ENCODE measurements at regions of chr6 and their contacts with region 1.

Region 1: DNA sequence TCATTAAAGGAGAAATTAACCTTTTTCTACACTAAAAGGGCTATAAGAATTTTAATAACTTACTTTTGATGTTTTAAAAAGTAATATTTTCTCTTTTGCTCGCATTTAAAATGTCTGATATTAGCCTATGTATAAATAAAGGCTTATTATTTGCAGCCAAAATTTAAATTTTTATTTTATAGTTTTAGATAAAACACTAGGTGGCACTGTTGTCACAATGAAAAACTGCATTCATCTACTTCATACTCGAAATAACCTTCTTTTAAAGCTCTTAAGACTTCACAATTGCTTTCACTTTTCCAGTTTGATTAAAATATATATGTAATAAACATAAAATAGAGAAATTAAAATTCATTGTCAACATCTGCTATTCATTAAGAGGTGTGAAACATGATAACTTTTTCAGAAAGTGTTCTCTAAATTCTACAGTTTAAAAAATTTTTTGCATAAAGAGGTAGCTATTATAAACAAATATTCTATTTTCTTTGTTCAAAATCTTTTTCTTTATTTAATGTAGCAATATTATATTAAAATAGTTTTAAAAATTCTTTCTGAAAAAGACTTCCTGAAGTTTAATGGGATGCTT is 78.8 kb upstream of the DEFB112 start:
- DNase-seq: peak; percentile 27
- H3K4me3 ChIP-seq: no peak overlapping the region
- H3K27ac ChIP-seq: no peak overlapping the region
- H3K4me1 ChIP-seq: no peaks in the 10 kb centered on the region
- CTCF ChIP-seq: peak; percentile 86

Region 2: DNA sequence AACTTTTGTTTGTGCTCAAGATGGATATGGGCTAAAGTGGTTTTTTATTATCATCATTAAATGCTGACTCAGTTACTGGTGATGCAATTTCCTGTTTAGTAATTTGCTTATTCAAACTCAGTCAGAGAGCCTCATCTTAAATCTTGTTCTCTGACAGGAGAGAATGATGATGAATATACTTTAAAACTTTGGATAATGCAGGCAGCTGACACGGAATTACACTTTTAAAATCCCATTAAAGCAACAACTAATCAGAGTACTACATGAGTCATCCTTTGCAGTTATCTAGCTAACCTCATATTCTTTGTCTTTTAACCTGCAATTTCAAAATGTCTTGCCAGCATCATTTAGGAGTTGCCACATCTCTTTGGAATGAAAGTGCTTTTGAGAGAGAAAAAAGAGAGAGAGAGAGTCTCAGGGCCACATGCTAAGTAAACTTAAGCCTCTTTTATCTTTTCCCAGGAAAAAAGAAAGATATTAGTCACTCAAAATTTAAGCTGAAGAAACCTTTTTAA is 587.2 kb before region 1 on chr6:
- CTCF ChIA-PET with region 1: no interaction called
- POLR2A ChIA-PET with region 1: no interaction called
- intact Hi-C with region 1: no loop called
- DNase-seq: no peak
- H3K4me3 ChIP-seq: no peak overlapping the region
- H3K27ac ChIP-seq: no peak overlapping the region
- H3K4me1 ChIP-seq: no peaks in the 10 kb centered on the region
- CTCF ChIP-seq: no peak

Region 3: DNA sequence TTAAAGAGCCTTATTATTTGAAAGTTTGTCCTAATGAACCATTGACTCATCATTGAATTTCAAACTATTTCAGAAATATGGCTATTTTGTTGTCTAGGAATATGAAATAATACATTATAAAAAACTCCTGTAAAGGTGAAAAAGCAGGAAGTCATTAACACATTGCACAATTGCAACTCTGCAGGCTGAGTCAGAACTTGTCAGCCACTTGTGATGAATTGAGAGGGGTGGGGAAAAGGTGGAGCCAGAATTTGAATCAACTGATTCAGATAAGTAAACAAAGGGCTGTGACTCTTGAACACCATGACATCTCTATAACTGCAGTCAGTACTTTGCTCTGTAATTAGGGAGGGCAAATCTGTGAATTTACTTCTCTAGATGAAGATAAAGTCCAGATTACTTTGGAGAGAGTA is 572.1 kb before region 1 on chr6:
- CTCF ChIA-PET with region 1: no interaction called
- POLR2A ChIA-PET with region 1: no interaction called
- intact Hi-C with region 1: no loop called
- DNase-seq: no peak
- H3K4me3 ChIP-seq: no peak overlapping the region
- H3K27ac ChIP-seq: no peak overlapping the region
- H3K4me1 ChIP-seq: no peaks in the 10 kb centered on the region
- CTCF ChIP-seq: no peak

Region 4: GRCh38 chr6:50602292-50602691 is 473.8 kb after region 1 on chr6:
- CTCF ChIA-PET with region 1: no interaction called
- POLR2A ChIA-PET with region 1: no interaction called
- intact Hi-C with region 1: loop called (anchors 2 kb)
- DNase-seq: peak; percentile 36
- H3K4me3 ChIP-seq: no peak overlapping the region
- H3K27ac ChIP-seq: no peak overlapping the region
- H3K4me1 ChIP-seq: no peaks in the 10 kb centered on the region
- CTCF ChIP-seq: peak; percentile 93

Region 5: DNA sequence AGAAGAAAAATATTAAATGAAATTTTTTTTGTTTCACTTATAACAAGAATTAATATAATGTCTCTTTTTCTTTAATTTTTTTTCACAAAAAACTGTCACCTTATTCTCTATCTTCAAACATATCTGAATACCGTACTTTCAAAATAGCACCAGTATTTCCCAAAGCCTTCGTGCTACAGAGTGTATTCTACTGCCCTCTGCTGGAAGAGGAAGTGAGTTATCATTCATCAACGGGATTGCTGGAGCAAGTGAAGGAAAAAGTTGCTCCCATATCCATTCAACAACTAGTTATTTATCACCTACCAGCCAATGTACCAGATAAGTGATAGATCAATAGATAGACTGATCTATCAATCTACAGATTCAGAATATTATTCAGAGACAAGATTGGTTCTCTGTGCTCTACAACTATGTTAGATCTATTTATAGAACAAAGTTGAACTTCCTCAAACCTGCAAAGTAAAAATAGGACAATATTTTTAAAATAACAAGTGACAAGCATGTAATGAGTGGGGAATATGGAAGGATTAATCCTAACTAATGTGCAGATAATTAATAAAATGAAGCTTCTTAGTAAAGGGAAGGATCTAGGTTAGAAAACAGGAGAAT is 663.5 kb after region 1 on chr6:
- CTCF ChIA-PET with region 1: no interaction called
- POLR2A ChIA-PET with region 1: no interaction called
- intact Hi-C with region 1: loop called (anchors 5 kb)
- DNase-seq: peak; percentile 54
- H3K4me3 ChIP-seq: no peak overlapping the region
- H3K27ac ChIP-seq: no peak overlapping the region
- H3K4me1 ChIP-seq: no peaks in the 10 kb centered on the region
- CTCF ChIP-seq: peak; percentile 93

Measured in OCI-LY7 (cell line).